ENCODE measurements at regions of chr3 and their contacts with region 1.

Region 1: GRCh38 chr3:107627962-107628542 is 105.3 kb downstream of the BBX start:
- DNase-seq: no peak
- ATAC-seq: no peak
- H3K4me3 Mint-ChIP-seq: no peak overlapping the region
- H3K27ac Mint-ChIP-seq: no peak overlapping the region
- H3K4me1 Mint-ChIP-seq: peaks cover 32% of the 10 kb centered on the region
- H3K27me3 Mint-ChIP-seq: no peaks in the 10 kb centered on the region
- CTCF ChIP-seq: no peak

Region 2: GRCh38 chr3:107643038-107643883 is 15.2 kb after region 1 on chr3:
- CTCF ChIA-PET with region 1: interaction called, 13 read pairs
- POLR2A ChIA-PET with region 1: no interaction called
- DNase-seq: no peak
- ATAC-seq: peak; percentile 92
- H3K4me3 Mint-ChIP-seq: no peak overlapping the region
- H3K27ac Mint-ChIP-seq: no peak overlapping the region
- H3K4me1 Mint-ChIP-seq: peaks cover 30% of the 10 kb centered on the region
- H3K27me3 Mint-ChIP-seq: no peaks in the 10 kb centered on the region
- CTCF ChIP-seq: no peak

Region 3: DNA sequence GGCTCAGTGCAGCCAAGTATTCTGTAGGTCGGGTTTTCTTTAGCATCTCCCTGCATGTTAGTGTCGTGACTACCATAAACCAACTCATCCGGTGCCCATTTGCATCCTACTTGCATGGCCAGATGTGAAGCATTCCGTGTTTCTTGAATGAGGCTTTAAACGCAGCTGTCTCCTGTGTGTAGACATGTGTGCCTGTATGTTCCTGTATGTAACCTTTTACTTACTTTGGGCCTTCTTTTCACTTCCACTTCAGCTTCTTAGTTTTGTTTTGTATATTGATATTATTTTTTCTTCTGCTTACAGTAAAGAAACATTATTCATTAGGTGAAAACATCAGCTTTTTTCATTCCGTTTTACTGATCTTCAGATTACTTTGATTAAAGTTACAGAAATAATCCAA is 162.6 kb after region 1 on chr3:
- CTCF ChIA-PET with region 1: no interaction called
- POLR2A ChIA-PET with region 1: no interaction called
- DNase-seq: no peak
- ATAC-seq: no peak
- H3K4me3 Mint-ChIP-seq: no peak overlapping the region
- H3K27ac Mint-ChIP-seq: no peak overlapping the region
- H3K4me1 Mint-ChIP-seq: no peaks in the 10 kb centered on the region
- H3K27me3 Mint-ChIP-seq: no peaks in the 10 kb centered on the region
- CTCF ChIP-seq: no peak

Measured in WTC11 (cell line).